ENCODE measurements at regions of chr1 and their contacts with region 1.

Region 1: GRCh38 chr1:113072757-113073478 is at the start of gene LRIG2:
- DNase-seq: peak; percentile 98
- H3K4me3 Mint-ChIP-seq: peak within 1 kb of the TSS; percentile 96
- H3K27ac Mint-ChIP-seq: peak within 1 kb of the TSS; percentile 85
- H3K4me1 Mint-ChIP-seq: peaks cover 30% of the 10 kb centered on the region
- H3K27me3 Mint-ChIP-seq: no peaks in the 10 kb centered on the region
- total RNA-seq, gene LRIG2: 9.6 to 10.8 TPM

Region 2: GRCh38 chr1:112715264-112716053 is 357.5 kb before region 1 on chr1 and contains the start of gene PPM1J:
- CTCF ChIA-PET with region 1: interaction called, 43 read pairs
- POLR2A ChIA-PET with region 1: interaction called, 13 read pairs
- DNase-seq: peak; percentile 99
- H3K4me3 Mint-ChIP-seq: peak within 1 kb of the TSS; percentile 81
- H3K27ac Mint-ChIP-seq: no peak within 1 kb of the TSS
- H3K4me1 Mint-ChIP-seq: peaks cover 32% of the 10 kb centered on the region
- H3K27me3 Mint-ChIP-seq: peaks cover 53% of the 10 kb centered on the region
- total RNA-seq, gene PPM1J: not detected

Region 3: DNA sequence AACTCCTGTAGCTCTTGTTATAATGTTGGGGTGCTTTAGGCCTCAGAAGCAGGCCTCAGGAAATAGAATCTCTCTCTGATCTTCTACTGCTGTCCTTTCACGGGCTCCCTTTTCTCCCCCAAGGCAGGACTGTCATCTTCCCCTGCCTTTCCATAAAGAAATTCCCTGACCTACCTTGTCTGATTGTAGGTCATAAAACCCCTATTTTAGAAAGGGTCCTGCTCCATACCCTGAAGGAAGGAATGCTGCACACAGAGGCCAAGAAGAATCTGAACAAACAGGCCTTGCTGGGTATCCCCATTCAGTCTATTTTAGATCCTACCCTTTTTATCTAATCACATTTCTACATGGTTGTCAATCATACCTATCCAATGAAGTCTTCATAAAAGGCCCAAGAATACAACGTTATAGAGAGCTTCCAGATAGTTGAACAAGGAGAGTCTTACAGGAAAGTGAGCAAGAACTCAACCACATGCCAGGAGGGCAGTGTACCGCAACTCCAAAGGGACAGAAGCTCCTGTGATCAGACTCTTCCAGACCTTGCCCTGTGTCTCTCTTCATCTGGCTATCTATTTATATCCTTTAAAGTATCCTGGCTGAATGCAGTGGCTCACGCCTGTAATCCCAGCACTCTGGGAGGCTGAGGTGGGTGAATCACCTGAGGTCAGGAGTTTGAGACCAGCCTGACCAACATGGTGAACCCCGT is 210.0 kb before region 1 on chr1:
- CTCF ChIA-PET with region 1: interaction called, 10 read pairs
- POLR2A ChIA-PET with region 1: no interaction called
- DNase-seq: no peak
- H3K4me3 Mint-ChIP-seq: no peak overlapping the region
- H3K27ac Mint-ChIP-seq: no peak overlapping the region
- H3K4me1 Mint-ChIP-seq: peaks cover 17% of the 10 kb centered on the region
- H3K27me3 Mint-ChIP-seq: no peaks in the 10 kb centered on the region

Region 4: DNA sequence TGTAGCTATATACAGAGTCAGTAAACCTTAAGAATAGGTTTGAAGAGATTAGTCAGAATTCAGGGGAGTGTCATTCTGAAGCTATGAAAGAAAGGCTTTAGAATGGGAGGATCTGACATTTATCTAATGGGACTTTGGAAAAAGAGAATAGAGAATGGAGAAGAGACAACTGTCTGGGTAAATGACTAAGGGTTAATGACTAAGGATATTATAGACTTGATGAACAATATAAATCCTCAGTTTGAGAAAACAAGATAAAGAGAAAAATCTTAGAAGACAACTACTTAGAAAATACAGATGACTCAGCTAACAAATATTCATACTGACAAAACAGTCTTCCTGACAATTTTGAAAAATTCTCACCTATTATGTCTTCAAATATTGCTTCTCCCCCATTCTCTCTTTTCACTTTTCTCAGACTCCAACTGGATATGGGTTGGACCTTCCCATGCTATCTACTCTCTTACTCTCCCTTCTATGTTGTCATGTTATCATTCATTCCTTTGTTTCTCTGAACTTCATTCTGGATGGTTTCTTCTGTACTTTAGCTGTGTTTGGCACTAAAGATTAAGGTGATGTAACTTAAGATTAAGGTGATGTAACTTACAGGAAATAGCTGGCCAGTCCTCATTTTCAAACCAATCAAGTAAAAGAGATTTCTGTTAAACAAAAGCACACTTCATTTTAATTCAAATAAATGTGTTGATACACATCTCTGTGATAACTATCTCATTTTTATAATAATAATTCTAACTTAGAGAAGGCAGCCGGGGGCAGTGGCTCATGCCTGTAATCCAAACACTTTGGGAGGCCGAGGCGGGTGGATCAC is 137.2 kb before region 1 on chr1:
- CTCF ChIA-PET with region 1: interaction called, 20 read pairs
- POLR2A ChIA-PET with region 1: interaction called, 4 read pairs
- DNase-seq: no peak
- H3K4me3 Mint-ChIP-seq: peak overlapping the region; percentile 50
- H3K27ac Mint-ChIP-seq: peak overlapping the region; percentile 81
- H3K4me1 Mint-ChIP-seq: peaks cover 54% of the 10 kb centered on the region
- H3K27me3 Mint-ChIP-seq: no peaks in the 10 kb centered on the region

Region 5: DNA sequence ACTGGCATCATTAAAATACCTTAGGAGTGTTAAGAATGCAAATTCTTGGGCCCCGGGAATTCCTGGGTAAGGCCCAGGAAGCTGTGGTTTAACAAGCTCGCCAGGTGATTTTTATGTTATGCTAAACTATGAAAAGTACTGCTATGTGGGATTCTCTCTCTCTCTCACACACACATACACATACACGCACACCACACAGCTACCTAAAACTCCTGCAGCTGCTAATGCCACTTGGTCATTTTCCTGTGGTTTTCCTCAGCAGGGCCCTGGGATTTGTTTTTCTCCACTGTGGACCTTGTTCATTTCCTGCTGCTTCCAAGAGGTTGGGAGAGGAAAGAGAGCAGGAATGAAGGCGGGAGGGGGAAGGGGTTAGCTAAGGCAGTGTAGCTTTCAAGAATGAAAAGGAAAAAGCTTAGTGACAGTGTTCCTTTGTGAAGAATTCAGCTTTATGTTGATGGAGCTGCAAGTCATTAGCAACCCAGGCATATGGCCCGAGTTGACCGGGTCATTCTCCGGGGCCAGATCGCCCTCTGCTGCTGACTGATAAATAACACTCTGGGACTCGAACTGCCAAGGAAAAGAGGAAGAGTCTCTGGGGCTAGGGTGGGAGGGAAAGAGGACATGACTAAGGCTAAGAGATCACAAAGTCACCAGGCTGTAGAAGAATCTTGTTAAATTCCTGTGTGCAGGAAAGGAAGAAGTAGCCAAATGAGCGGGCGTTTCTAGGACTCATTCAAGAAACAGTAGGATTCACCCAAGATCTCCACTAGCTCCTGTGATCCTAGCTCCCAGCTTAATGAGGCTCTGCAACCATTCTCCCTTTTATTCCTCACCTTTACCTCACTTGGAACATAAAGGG is 30.4 kb before region 1 on chr1:
- CTCF ChIA-PET with region 1: interaction called, 51 read pairs
- POLR2A ChIA-PET with region 1: interaction called, 21 read pairs
- DNase-seq: peak; percentile 49
- H3K4me3 Mint-ChIP-seq: no peak overlapping the region
- H3K27ac Mint-ChIP-seq: no peak overlapping the region
- H3K4me1 Mint-ChIP-seq: peaks cover 48% of the 10 kb centered on the region
- H3K27me3 Mint-ChIP-seq: no peaks in the 10 kb centered on the region

Region 6: DNA sequence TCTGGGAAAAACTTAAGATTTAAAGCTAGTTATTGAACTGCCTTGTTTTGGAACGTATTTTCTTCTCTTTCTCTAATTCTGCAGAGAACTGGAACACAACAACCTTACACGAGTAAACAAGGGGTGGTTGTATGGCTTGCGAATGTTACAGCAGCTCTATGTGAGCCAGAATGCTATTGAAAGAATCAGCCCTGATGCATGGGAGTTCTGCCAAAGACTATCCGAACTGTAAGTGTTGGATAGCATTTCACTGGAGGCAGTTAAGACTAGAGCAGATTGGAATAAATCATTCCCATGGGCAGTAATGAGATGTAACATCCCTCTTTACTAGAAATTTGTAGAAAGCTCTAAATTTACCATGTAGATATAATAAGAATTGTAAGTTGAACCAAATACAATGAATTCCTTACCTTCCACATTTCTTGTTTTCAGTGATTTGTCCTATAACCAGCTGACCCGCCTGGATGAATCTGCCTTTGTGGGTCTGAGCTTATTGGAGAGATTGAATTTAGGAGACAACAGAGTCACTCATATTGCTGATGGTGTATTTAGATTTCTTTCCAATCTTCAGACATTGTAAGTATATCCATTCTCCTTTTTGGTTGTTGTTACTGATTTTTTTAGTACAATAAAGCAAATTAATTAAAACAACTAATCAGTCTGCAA is 23.0 kb after region 1 on chr1:
- CTCF ChIA-PET with region 1: interaction called, 15 read pairs
- POLR2A ChIA-PET with region 1: no interaction called
- DNase-seq: no peak
- H3K4me3 Mint-ChIP-seq: no peak overlapping the region
- H3K27ac Mint-ChIP-seq: no peak overlapping the region
- H3K4me1 Mint-ChIP-seq: peaks cover 4% of the 10 kb centered on the region
- H3K27me3 Mint-ChIP-seq: no peaks in the 10 kb centered on the region

Region 7: DNA sequence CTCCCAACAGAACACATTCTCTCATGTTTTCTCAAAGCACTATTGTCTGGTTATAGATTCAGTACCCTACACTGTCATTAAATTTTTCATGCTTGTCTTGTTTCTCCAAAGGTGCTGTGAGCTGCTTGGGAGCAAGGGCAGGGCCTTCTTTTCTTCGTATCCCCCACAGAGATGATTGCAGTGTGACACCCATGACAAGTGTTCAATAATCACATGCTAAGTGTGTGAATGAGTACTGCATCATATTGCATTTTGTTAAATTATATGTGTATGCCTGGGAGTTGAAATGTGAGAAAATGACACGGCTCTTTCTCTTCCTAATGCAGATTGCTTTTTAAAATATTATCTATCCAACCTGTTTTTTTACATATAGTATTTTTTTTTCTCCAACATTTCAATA is 260.1 kb after region 1 on chr1:
- CTCF ChIA-PET with region 1: no interaction called
- POLR2A ChIA-PET with region 1: no interaction called
- DNase-seq: no peak
- H3K4me3 Mint-ChIP-seq: no peak overlapping the region
- H3K27ac Mint-ChIP-seq: no peak overlapping the region
- H3K4me1 Mint-ChIP-seq: no peaks in the 10 kb centered on the region
- H3K27me3 Mint-ChIP-seq: peaks cover 8% of the 10 kb centered on the region